AG04450 (cell line): ENCODE measurements at regions of chr19 and their contacts with region 1.

Region 1: DNA sequence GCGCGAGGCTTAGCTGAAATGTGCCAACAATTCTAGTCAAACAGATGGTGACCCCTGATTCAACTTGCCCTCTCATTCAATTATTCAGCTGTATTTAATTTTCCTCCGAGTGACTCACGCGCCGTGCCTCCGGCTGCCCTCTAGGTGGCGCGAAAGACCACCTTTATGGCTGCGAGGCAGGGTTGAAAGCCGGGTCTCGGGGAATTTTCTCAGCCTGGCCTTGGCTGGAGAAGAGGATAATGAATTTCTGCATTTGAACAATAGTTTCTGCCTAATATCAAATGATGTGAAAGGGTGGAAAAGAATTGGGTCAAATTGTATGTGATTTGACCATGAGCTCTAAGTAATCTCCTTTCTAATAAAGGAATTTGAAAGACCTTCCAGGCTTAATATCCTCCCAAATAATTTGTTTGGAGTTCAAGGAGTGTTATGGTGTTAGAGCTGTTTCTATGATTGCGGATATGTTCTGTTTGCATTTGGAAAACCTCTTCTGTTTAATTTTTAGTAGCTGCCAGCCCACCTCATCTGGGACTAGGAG is 310.9 kb downstream of the ZNF536 start:
- DNase-seq: peak; percentile 61
- H3K4me3 ChIP-seq: no peak overlapping the region
- H3K27ac ChIP-seq: no peak overlapping the region
- H3K27me3 ChIP-seq: peaks cover 16% of the 10 kb centered on the region
- CTCF ChIP-seq: peak; percentile 90

Region 2: GRCh38 chr19:30669329-30670010 is 13.6 kb before region 1 on chr19:
- CTCF ChIA-PET with region 1: interaction called, 52 read pairs
- POLR2A ChIA-PET with region 1: no interaction called
- DNase-seq: no peak
- H3K4me3 ChIP-seq: no peak overlapping the region
- H3K27ac ChIP-seq: no peak overlapping the region
- H3K27me3 ChIP-seq: no peaks in the 10 kb centered on the region
- CTCF ChIP-seq: peak; percentile 77

Region 3: DNA sequence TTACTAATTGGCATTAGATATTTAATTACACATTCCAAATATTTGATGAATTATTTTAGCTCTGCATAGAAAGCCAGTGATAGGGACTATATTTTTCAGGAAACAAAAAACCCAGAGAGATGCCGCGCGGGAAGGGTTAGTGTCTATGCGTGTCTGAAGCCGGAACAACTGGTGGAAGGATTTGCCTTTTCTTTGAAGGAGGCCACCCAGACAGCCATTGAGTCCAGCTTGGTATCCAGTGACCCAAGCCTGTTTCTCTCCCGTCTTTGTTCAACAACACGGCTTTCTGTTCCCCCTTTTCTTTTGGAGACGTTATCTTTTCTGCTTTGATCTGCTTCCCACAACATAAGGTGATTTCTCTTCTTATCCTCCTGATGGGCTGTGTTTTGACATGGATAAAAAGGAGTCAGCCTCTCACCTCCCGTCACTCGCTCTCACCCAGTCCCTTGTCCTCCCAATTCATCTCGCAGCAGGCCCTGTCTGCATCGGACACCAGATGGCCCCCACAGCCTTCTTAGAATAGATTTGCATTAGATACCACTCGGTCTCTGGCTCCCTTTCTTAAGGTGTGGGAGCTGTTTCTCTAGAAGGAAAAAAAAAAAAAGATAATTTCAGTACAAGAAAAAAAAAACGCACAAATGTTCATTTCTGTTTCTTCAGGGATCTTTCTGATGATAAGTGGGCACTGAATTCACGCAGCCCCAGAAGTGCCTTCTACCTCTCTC is 50.9 kb after region 1 on chr19:
- CTCF ChIA-PET with region 1: no interaction called
- POLR2A ChIA-PET with region 1: no interaction called
- DNase-seq: no peak
- H3K4me3 ChIP-seq: no peak overlapping the region
- H3K27ac ChIP-seq: no peak overlapping the region
- H3K27me3 ChIP-seq: no peaks in the 10 kb centered on the region
- CTCF ChIP-seq: no peak

Region 4: GRCh38 chr19:30852168-30852567 is 169.1 kb after region 1 on chr19:
- CTCF ChIA-PET with region 1: no interaction called
- POLR2A ChIA-PET with region 1: no interaction called
- DNase-seq: no peak
- H3K4me3 ChIP-seq: no peak overlapping the region
- H3K27ac ChIP-seq: no peak overlapping the region
- H3K27me3 ChIP-seq: no peaks in the 10 kb centered on the region
- CTCF ChIP-seq: no peak

Region 5: DNA sequence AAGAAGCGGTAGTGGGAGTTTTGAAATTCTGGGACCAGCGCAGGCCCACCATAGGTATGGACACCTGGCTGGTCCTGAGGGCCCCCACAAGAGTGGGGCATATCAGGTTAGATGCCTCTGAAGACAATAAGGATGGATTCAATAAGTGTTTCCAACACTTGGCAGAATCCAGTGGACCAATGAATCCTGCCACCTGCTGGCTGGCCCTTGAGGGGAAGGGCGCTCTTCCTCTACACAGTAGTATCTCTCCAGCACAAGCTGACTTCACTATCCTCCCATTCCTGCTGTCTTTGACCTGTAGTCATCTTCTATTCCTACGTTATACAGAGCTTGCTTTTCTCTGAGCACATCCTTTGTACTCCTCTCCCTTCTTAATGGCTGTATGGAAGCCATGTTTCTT is 865.9 kb after region 1 on chr19:
- CTCF ChIA-PET with region 1: interaction called, 15 read pairs
- POLR2A ChIA-PET with region 1: no interaction called
- DNase-seq: peak; percentile 11
- H3K4me3 ChIP-seq: no peak overlapping the region
- H3K27ac ChIP-seq: no peak overlapping the region
- H3K27me3 ChIP-seq: peaks cover 2% of the 10 kb centered on the region
- CTCF ChIP-seq: peak; percentile 79

Region 6: DNA sequence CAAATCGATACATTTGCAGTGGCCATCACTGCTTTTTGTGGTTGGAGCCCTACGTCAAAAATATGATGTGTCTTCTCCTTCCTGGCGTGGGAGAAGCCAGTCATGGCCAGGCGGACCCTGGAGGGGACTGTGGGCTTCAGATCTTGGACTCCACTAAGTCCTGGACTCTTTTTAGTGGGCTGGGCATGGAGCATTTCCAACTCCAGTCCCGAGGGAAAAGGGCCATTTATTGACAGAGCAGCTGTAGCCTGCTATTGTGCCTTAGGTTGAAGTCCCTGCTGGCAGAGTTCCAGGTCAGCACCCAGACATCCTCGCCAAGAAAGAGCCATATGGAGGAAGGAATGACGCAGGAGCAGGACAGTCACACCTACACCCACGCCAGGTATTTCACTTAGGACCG is 1483.2 kb after region 1 on chr19:
- CTCF ChIA-PET with region 1: interaction called, 12 read pairs
- POLR2A ChIA-PET with region 1: no interaction called
- DNase-seq: no peak
- H3K4me3 ChIP-seq: no peak overlapping the region
- H3K27ac ChIP-seq: no peak overlapping the region
- H3K27me3 ChIP-seq: no peaks in the 10 kb centered on the region
- CTCF ChIP-seq: no peak